A549 (cell line): ENCODE measurements at regions of chr6 and their contacts with region 1.

Region 1: GRCh38 chr6:138428944-138429598 is 25.0 kb downstream of the HEBP2 start:
- DNase-seq: peak; percentile 25 to 54
- ATAC-seq: peak; percentile 73 to 78; a peak in 4 of 6 replicates
- H3K4me3 ChIP-seq: no peak overlapping the region
- H3K27ac ChIP-seq: peak overlapping the region; percentile 2 to 3; a peak in 1 of 6 replicates
- H3K4me1 ChIP-seq: no peaks in the 10 kb centered on the region
- CTCF ChIP-seq: peak; percentile 73
- EP300 ChIP-seq: no peak
- POLR2A ChIP-seq: no peak
- RAD21 ChIP-seq: peak; percentile 79 to 86

Region 2: GRCh38 chr6:138415125-138415524 is 13.9 kb before region 1 on chr6:
- CTCF ChIA-PET with region 1: interaction called, 16 read pairs
- POLR2A ChIA-PET with region 1: no interaction called
- DNase-seq: no peak
- ATAC-seq: no peak
- H3K4me3 ChIP-seq: no peak overlapping the region
- H3K27ac ChIP-seq: no peak overlapping the region
- H3K4me1 ChIP-seq: peaks cover 16% of the 10 kb centered on the region
- CTCF ChIP-seq: no peak
- EP300 ChIP-seq: no peak
- POLR2A ChIP-seq: no peak
- RAD21 ChIP-seq: no peak

Region 3: GRCh38 chr6:138477913-138478539 is 49.0 kb after region 1 on chr6:
- CTCF ChIA-PET with region 1: interaction called, 11 read pairs
- POLR2A ChIA-PET with region 1: no interaction called
- DNase-seq: no peak
- ATAC-seq: no peak
- H3K4me3 ChIP-seq: no peak overlapping the region
- H3K27ac ChIP-seq: no peak overlapping the region
- H3K4me1 ChIP-seq: no peaks in the 10 kb centered on the region
- CTCF ChIP-seq: no peak
- EP300 ChIP-seq: no peak
- POLR2A ChIP-seq: no peak
- RAD21 ChIP-seq: no peak

Region 4: DNA sequence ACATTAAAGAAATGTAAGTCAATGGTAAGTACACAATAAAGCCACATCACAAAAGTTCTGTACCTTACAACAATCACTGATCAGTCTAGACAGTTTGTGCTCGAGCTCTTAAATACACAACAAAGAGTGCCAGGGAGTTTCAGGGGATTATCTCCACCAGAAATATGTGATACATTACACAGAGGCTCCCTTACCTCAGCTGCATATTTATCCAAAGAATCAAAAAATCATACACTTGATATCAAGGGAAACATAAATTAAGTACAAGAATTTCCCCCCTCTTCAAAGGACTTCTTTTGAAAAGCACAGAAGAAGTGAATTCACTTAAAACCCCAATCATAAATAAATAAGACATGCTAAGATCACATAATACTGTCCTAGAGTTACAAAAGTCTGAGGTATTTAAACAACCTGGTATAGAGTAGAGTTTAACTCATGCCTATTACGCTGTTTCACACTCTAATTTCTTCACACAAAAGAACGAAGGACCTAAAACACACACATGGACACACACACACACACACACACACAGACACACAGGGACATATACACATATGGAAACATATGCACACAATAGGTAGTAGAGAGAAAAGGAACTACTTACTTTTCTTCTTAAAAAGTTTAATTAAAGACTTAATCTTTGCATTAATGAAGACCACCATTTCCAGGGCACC is 69.7 kb after region 1 on chr6:
- CTCF ChIA-PET with region 1: interaction called, 10 read pairs
- POLR2A ChIA-PET with region 1: no interaction called
- DNase-seq: no peak
- ATAC-seq: no peak
- H3K4me3 ChIP-seq: no peak overlapping the region
- H3K27ac ChIP-seq: peak overlapping the region; percentile 14 to 40; a peak in 3 of 6 replicates
- H3K4me1 ChIP-seq: peaks cover 34% of the 10 kb centered on the region
- CTCF ChIP-seq: no peak
- EP300 ChIP-seq: no peak
- POLR2A ChIP-seq: no peak
- RAD21 ChIP-seq: no peak

Region 5: GRCh38 chr6:138509371-138509770 is 80.3 kb after region 1 on chr6:
- CTCF ChIA-PET with region 1: interaction called, 85 read pairs
- POLR2A ChIA-PET with region 1: no interaction called
- DNase-seq: peak; percentile 27 to 62
- ATAC-seq: peak; percentile 56 to 80; a peak in 3 of 6 replicates
- H3K4me3 ChIP-seq: no peak overlapping the region
- H3K27ac ChIP-seq: no peak overlapping the region
- H3K4me1 ChIP-seq: peaks cover 30% of the 10 kb centered on the region; the same call in 2 of the 3 replicates
- CTCF ChIP-seq: peak; percentile 67
- EP300 ChIP-seq: no peak
- POLR2A ChIP-seq: no peak
- RAD21 ChIP-seq: peak; percentile 75 to 83

Region 6: DNA sequence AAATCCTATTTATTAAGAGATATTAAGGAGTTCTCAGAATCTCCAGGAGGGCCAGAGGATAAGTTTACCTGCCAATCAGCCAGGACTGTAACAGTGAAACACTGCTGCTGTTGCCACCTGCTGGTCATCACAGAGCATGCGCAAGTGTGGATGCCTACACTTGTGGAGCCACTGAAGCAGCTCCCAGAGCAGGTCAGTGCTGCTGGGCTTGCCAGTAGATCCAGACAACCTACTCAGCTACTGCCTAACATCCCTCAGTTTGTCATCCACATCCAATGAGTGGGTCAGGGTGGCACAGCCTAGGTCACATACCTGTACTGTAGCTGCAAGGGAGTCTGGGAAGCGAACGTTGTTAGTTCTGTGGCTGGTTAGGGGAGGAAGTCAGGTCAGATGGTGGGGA is 88.6 kb after region 1 on chr6:
- CTCF ChIA-PET with region 1: interaction called, 53 read pairs
- POLR2A ChIA-PET with region 1: no interaction called
- DNase-seq: peak in 1 of 2 experiments; percentile 28
- ATAC-seq: peak in 1 of 2 experiments; percentile 62; a peak in 2 of 6 replicates
- H3K4me3 ChIP-seq: no peak overlapping the region
- H3K27ac ChIP-seq: no peak overlapping the region
- H3K4me1 ChIP-seq: no peaks in the 10 kb centered on the region
- CTCF ChIP-seq: peak; percentile 15; the same call in 1 of the 3 replicates
- EP300 ChIP-seq: no peak
- POLR2A ChIP-seq: no peak
- RAD21 ChIP-seq: no peak

Region 7: GRCh38 chr6:138765896-138766655 is 337.0 kb after region 1 on chr6:
- CTCF ChIA-PET with region 1: interaction called, 18 read pairs
- POLR2A ChIA-PET with region 1: no interaction called
- DNase-seq: peak; percentile 28 to 31
- ATAC-seq: no peak
- H3K4me3 ChIP-seq: no peak overlapping the region
- H3K27ac ChIP-seq: no peak overlapping the region
- H3K4me1 ChIP-seq: no peaks in the 10 kb centered on the region
- CTCF ChIP-seq: peak; percentile 66
- EP300 ChIP-seq: no peak
- POLR2A ChIP-seq: no peak
- RAD21 ChIP-seq: peak; percentile 70 to 78